Caco-2 (cell line): ENCODE measurements at regions of chr5 and their contacts with region 1.

Region 1: DNA sequence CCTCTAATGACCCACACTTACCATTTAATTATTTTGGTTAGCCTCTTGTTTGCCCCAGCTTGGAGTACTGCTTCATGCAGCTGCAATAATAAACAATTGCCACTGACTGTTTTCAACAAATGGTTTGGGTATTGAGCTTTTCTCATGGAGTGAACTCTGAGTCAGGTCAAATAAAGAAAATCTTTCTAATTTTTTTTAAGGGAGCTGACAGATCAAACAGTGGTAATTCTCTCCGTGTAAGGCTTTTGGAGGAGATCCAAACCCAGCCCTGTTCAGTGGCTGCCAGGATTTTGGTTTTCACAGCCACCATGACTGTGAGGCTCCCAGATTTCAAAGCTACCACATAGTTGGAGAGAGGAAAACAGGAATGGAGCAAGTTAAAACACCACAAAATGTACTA is 110.7 kb upstream of the EFNA5 start:
- DNase-seq: no peak
- H3K4me3 ChIP-seq: no peak overlapping the region
- H3K4me3 Mint-ChIP-seq: no peak overlapping the region
- H3K27ac Mint-ChIP-seq: no peak overlapping the region
- H3K4me1 ChIP-seq: peaks cover 20% of the 10 kb centered on the region
- H3K4me1 Mint-ChIP-seq: peaks cover 15% of the 10 kb centered on the region
- H3K27me3 ChIP-seq: no peaks in the 10 kb centered on the region
- H3K27me3 Mint-ChIP-seq: peaks cover 7% of the 10 kb centered on the region
- CTCF ChIP-seq: no peak

Region 2: GRCh38 chr5:107766439-107766838 is 15.0 kb before region 1 on chr5:
- CTCF ChIA-PET with region 1: no interaction called
- POLR2A ChIA-PET with region 1: interaction called, 7 read pairs
- intact Hi-C with region 1: loop called (anchors 1 kb)
- DNase-seq: peak in 1 of 2 experiments; percentile 24
- H3K4me3 ChIP-seq: no peak overlapping the region
- H3K4me3 Mint-ChIP-seq: no peak overlapping the region
- H3K27ac Mint-ChIP-seq: no peak overlapping the region
- H3K4me1 ChIP-seq: no peaks in the 10 kb centered on the region
- H3K4me1 Mint-ChIP-seq: peaks cover 12% of the 10 kb centered on the region
- H3K27me3 ChIP-seq: no peaks in the 10 kb centered on the region; the same call in 1 of the 2 replicates
- H3K27me3 Mint-ChIP-seq: no peaks in the 10 kb centered on the region
- CTCF ChIP-seq: no peak

Region 3: GRCh38 chr5:107831612-107832395 is 50.4 kb after region 1 on chr5:
- CTCF ChIA-PET with region 1: no interaction called
- POLR2A ChIA-PET with region 1: no interaction called
- intact Hi-C with region 1: no loop called
- DNase-seq: no peak
- H3K4me3 ChIP-seq: no peak overlapping the region
- H3K4me3 Mint-ChIP-seq: no peak overlapping the region
- H3K27ac Mint-ChIP-seq: no peak overlapping the region
- H3K4me1 ChIP-seq: no peaks in the 10 kb centered on the region
- H3K4me1 Mint-ChIP-seq: no peaks in the 10 kb centered on the region
- H3K27me3 ChIP-seq: no peaks in the 10 kb centered on the region; the same call in 1 of the 2 replicates
- H3K27me3 Mint-ChIP-seq: peaks cover 5% of the 10 kb centered on the region
- CTCF ChIP-seq: no peak

Region 4: DNA sequence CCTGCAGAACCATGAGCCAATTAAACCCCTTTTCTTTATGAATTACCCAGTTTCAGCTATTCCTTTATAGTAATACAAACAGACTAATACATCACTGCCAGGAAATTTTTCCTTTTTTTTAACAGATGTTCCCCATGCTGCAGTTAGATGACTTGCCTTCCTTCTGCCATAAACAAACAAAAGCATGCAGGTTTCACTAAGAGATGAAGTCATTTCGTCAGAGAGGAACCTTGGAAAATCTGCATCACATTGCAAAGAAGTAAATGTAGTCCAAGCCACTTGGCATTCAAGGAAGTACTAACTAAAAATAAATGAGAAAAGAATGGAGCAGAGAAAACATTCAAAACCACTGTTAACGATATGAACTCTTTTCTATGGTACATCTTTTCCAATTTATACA is 83.3 kb after region 1 on chr5:
- CTCF ChIA-PET with region 1: no interaction called
- POLR2A ChIA-PET with region 1: no interaction called
- intact Hi-C with region 1: loop called (anchors 5 kb)
- DNase-seq: no peak
- H3K4me3 ChIP-seq: no peak overlapping the region
- H3K4me3 Mint-ChIP-seq: no peak overlapping the region
- H3K27ac Mint-ChIP-seq: no peak overlapping the region
- H3K4me1 ChIP-seq: no peaks in the 10 kb centered on the region
- H3K4me1 Mint-ChIP-seq: peaks cover 7% of the 10 kb centered on the region
- H3K27me3 ChIP-seq: no peaks in the 10 kb centered on the region
- H3K27me3 Mint-ChIP-seq: no peaks in the 10 kb centered on the region
- CTCF ChIP-seq: no peak

Region 5: DNA sequence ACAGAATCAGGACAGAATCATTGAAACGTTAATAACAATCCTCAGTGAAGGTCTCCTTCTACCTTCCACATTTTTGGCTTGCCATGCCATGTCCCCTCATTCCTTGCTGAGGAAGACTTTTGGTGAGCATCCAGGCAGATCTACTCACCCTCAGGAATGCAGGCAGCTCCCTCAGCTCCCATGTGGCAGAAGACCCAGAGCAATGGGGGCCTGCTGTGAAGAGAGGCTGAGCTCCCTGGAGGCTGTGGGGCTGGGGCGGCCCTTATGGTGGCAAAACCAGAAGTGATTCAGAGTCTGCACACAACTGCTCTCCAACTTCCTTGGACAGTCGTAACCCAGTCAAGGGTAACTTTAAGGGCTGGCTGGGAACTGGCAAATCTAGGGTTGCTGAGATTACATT is 136.5 kb after region 1 on chr5:
- CTCF ChIA-PET with region 1: no interaction called
- POLR2A ChIA-PET with region 1: no interaction called
- intact Hi-C with region 1: no loop called
- DNase-seq: no peak
- H3K4me3 ChIP-seq: no peak overlapping the region
- H3K4me3 Mint-ChIP-seq: no peak overlapping the region
- H3K27ac Mint-ChIP-seq: no peak overlapping the region
- H3K4me1 ChIP-seq: no peaks in the 10 kb centered on the region
- H3K4me1 Mint-ChIP-seq: no peaks in the 10 kb centered on the region
- H3K27me3 ChIP-seq: no peaks in the 10 kb centered on the region
- H3K27me3 Mint-ChIP-seq: no peaks in the 10 kb centered on the region
- CTCF ChIP-seq: no peak

Region 6: GRCh38 chr5:108451269-108451668 is 669.8 kb after region 1 on chr5:
- CTCF ChIA-PET with region 1: no interaction called
- POLR2A ChIA-PET with region 1: no interaction called
- intact Hi-C with region 1: no loop called
- DNase-seq: no peak
- H3K4me3 ChIP-seq: no peak overlapping the region
- H3K4me3 Mint-ChIP-seq: no peak overlapping the region
- H3K27ac Mint-ChIP-seq: no peak overlapping the region
- H3K4me1 ChIP-seq: no peaks in the 10 kb centered on the region
- H3K4me1 Mint-ChIP-seq: no peaks in the 10 kb centered on the region
- H3K27me3 ChIP-seq: no peaks in the 10 kb centered on the region
- H3K27me3 Mint-ChIP-seq: no peaks in the 10 kb centered on the region
- CTCF ChIP-seq: no peak